Activated CD8-positive, alpha-beta T cell treated with anti-CD3 and anti-CD28 coated beads for 36 hours (primary cell): ENCODE measurements at regions of chr3 and their contacts with region 1.

Region 1: DNA sequence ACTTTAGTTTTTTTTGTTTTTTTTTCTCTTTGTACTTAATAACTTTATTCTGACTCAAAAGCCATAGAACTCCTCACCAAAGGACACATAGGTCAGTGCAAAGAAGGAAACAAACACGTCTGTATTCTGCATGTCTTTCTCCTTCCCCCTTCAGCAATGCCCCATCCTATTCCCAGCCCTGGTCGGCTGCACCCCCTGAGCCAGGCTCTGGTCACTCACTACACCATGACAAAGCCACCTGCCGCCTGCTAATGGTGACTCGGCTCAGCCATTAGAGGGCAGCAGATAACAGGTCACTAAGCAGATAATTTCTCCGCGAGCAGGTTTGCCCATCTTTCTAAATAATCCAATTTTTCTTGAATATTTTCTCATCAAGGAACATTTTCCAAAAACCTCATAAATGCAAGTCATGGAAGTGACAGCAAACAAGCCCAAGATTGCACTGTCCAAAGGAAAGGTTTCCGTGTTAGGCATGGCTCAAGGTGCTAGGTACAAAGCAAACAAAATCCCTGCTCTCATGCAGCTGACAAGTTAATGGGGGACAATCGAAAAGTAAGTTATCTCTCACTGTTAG is 37.8 kb downstream of the TM4SF4 start:
- DNase-seq: peak; percentile 53
- ATAC-seq: peak; percentile 60
- H3K4me3 Mint-ChIP-seq: no peak overlapping the region
- H3K27ac Mint-ChIP-seq: no peak overlapping the region
- H3K4me1 Mint-ChIP-seq: peaks cover 8% of the 10 kb centered on the region
- H3K27me3 Mint-ChIP-seq: peaks cover 20% of the 10 kb centered on the region
- CTCF ChIP-seq: peak; percentile 45

Region 2: GRCh38 chr3:149527531-149528339 is 15.4 kb after region 1 on chr3:
- CTCF ChIA-PET with region 1: interaction called, 10 read pairs
- POLR2A ChIA-PET with region 1: no interaction called
- intact Hi-C with region 1: no loop called
- DNase-seq: no peak
- ATAC-seq: no peak
- H3K4me3 Mint-ChIP-seq: no peak overlapping the region
- H3K27ac Mint-ChIP-seq: no peak overlapping the region
- H3K4me1 Mint-ChIP-seq: peaks cover 3% of the 10 kb centered on the region
- H3K27me3 Mint-ChIP-seq: no peaks in the 10 kb centered on the region
- CTCF ChIP-seq: no peak

Region 3: DNA sequence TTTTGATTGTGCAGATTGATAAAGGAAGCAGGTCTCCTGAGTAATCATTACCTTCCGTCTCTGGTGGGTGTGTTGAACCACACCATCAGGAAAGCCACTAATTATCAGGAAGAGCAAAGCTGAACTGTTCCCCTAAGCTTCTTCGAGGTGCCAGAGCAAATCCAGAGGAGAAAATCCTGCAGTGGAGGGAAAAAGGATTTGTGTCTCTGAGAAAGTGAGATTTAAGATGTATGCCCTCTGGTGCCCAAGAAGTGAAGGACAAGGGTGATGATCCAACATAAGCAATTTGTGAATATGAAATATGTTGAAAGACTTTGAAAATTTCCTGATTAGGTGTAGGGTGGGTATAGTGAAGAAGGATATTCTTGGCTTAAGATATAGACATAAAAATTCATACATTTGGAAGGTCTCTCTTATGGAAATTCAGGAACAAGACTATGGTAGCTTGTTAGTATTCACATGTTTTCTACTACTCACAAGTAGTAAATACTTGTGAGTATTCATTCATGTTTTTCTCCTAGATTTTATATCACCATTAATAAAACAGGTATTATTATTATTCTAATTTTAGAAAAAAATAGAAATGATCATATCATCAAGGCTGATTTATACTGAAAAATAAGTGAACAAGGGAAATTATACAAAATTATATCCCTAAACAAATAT is 205.2 kb after region 1 on chr3:
- CTCF ChIA-PET with region 1: interaction called, 3 read pairs
- POLR2A ChIA-PET with region 1: no interaction called
- intact Hi-C with region 1: loop called (anchors 10 kb)
- DNase-seq: peak; percentile 58
- ATAC-seq: no peak
- H3K4me3 Mint-ChIP-seq: no peak overlapping the region
- H3K27ac Mint-ChIP-seq: no peak overlapping the region
- H3K4me1 Mint-ChIP-seq: no peaks in the 10 kb centered on the region
- H3K27me3 Mint-ChIP-seq: peaks cover 2% of the 10 kb centered on the region
- CTCF ChIP-seq: peak; percentile 60

Region 4: GRCh38 chr3:149771652-149772271 is 259.5 kb after region 1 on chr3:
- CTCF ChIA-PET with region 1: interaction called, 18 read pairs
- POLR2A ChIA-PET with region 1: no interaction called
- intact Hi-C with region 1: no loop called
- DNase-seq: peak; percentile 62
- ATAC-seq: peak; percentile 61
- H3K4me3 Mint-ChIP-seq: no peak overlapping the region
- H3K27ac Mint-ChIP-seq: no peak overlapping the region
- H3K4me1 Mint-ChIP-seq: no peaks in the 10 kb centered on the region
- H3K27me3 Mint-ChIP-seq: peaks cover 9% of the 10 kb centered on the region
- CTCF ChIP-seq: peak; percentile 76